Heart right ventricle (tissue), 16 donors: ENCODE measurements at regions of chr13 and their contacts with region 1.

Region 1: GRCh38 chr13:37059848-37060192 is 332 bp upstream of the SUPT20H start:
- DNase-seq: no peak
- ATAC-seq: peak in 4 of 8 donors; percentile 2 to 35 (median 4)
- H3K4me3 ChIP-seq: peak overlapping the region; percentile 54 to 96 (median 74)
- H3K27ac ChIP-seq: peak overlapping the region in 9 of 10 donors; percentile 83 to 99 (median 90)
- H3K4me1 ChIP-seq: peaks cover 2 to 30% (median 17%) of the 10 kb centered on the region in 9 donors
- H3K27me3 ChIP-seq: no peaks in the 10 kb centered on the region
- CTCF ChIP-seq: no peak

Region 2: DNA sequence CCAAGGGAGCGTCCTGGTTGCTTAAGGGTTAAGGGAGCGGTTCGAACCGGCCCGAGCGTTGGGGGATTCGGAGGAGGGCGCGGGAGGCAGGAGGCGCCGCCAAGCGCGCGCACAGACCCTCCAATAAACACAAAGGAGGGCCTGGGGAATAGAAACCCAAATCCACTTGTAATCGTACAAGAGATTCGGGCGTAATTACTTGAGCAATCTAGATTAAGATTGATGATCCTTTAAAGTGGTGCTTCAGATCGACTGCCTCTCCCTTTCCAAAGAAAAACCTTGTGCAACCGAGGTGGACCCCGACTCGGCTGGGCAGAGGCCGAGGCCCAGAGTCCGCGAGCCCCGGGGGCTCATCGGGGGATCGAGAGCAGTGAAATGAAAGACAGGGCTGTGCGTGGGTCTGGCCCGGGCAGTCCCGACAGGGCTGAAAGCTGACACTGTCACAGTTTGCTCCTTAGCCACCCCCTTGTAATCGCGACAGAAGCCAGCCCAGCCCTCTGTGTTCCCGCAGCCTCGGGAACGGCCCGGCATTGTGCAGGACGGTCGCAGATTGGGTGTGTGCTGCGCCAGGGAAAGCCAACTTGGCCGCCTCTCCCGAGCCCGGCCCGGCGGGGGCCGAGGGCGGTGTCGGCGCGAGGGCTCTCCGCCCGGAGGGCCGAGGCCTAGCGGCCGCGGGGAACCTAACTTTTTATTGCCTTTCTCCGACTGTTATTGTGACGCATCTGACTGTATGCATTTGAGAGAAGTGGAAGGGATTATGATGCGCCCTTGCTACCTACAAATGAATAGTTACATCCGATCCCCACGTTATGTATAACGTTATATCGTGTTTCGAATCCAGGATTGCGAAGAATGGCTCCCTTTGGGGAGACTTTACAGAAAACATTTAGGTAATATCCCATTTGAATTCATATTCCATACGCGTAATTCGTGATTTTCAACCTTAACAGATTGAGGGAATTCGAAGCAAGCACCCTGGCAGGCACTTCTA is 1588.9 kb before region 1 on chr13:
- intact Hi-C with region 1: loop called in 1 of 10 experiments (anchors 5 kb)
- DNase-seq: peak; percentile 29 to 60
- ATAC-seq: peak; percentile 81 to 95 (median 88)
- H3K4me3 ChIP-seq: peak overlapping the region; percentile 16 to 65 (median 57)
- H3K27ac ChIP-seq: peak overlapping the region; percentile 31 to 92 (median 76)
- H3K4me1 ChIP-seq: peaks cover 0 to 23% (median 0%) of the 10 kb centered on the region in 9 donors
- H3K27me3 ChIP-seq: peaks cover 0 to 75% (median 0%) of the 10 kb centered on the region in 7 donors
- CTCF ChIP-seq: peak in 2 of 9 donors; percentile 12 to 17